ENCODE measurements at regions of chr17 and their contacts with region 1.

Region 1: DNA sequence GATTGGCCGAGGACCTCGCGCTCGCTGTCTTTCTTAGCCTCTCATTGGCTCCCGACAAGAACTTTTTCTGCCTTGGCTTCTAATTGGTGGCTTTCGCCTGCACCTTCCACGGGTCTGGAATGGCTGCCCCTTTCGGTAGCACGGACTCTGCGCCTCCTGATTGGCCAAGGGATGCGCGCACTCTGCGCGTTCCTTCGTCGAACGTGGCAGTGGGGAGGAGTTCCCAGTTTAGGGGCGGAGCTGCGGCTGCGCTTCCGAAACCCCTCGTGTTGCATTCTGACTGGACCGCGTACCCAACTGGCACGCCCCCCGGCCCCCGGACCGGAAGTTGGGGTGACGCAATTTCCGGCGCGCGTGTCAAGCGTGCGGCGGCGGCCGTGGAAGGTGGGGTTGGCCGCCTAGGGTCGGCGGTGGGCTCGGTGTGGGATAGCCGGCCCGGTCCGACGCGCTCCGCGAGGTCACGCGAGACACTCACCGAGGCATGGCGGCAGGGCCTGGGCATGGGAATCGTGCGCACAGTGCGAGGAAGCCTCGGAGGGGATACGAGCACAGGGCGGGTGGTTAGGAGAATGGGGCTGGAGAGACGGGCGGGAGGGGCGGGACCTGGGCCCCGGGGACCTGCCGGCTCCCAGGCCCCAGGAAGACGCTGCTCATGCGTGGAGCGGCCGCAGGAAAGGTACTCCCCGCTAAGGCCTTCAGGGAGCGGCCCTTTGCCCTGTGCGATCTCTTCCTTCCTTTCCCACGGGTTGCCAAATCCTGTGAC is 602 bp upstream of the P4HB start:
- DNase-seq: peak; percentile 100
- H3K4me3 ChIP-seq: peak overlapping the region in 2 of 3 experiments; percentile 39 to 61
- H3K27ac ChIP-seq: peak overlapping the region; percentile 80
- H3K4me1 ChIP-seq: peaks cover 20% of the 10 kb centered on the region
- H3K27me3 ChIP-seq: no peaks in the 10 kb centered on the region
- CTCF ChIP-seq: no peak
- POLR2A ChIP-seq: peak; percentile 95

Region 2: GRCh38 chr17:81693509-81694210 is 167.3 kb before region 1 on chr17:
- CTCF ChIA-PET with region 1: no interaction called
- POLR2A ChIA-PET with region 1: no interaction called
- dilution Hi-C with region 1: no loop called
- intact Hi-C with region 1: no loop called
- DNase-seq: no peak
- H3K4me3 ChIP-seq: no peak overlapping the region
- H3K27ac ChIP-seq: no peak overlapping the region
- H3K4me1 ChIP-seq: no peaks in the 10 kb centered on the region
- H3K27me3 ChIP-seq: no peaks in the 10 kb centered on the region
- CTCF ChIP-seq: no peak
- POLR2A ChIP-seq: no peak

Region 3: DNA sequence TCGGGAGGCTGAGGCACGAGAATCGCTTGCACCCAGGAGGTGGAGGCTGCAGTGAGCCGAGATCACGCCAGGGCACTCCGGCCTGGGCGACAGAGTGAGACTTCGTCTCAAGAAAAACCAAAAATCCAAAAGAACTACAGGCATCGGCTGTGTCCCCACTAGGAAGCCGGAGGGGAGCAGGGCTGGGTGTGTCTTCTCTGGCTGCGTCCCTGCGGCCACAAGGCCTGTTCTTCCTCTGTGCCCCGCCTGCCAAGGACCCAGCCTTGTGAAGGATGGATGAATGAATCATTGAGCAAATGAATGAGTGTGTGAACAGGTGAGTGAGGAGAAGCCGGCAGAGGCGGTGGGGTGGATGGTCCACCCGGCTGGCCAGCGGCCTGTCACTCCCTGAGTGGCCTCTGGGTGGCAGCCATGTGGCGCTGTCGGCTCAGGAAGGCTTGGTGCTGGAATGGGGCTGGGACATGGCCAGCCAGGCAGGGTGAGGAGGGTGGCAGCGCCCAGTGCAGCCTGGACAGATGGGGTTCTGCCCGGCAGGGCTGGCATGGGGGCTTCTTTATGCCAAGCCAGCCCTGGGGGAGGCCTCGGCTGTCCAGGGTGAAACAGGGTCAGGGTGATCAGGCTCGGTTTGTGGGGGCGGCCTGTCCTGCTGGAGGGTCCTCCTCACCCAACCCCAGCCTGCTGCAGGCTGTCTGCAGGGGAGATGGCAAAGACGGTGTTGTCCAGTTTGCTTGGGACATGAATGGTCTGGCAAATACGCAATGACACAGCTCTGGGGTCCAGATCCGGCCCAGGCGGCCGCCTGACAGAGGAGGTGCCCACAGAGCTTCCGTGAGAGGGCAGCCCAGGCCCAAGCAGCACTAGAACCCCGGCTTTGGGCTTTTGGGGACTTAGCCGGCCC is 127.2 kb before region 1 on chr17:
- CTCF ChIA-PET with region 1: no interaction called
- POLR2A ChIA-PET with region 1: no interaction called
- dilution Hi-C with region 1: no loop called
- intact Hi-C with region 1: loop called (anchors 1 kb)
- DNase-seq: peak; percentile 55
- H3K4me3 ChIP-seq: no peak overlapping the region
- H3K27ac ChIP-seq: no peak overlapping the region
- H3K4me1 ChIP-seq: no peaks in the 10 kb centered on the region
- H3K27me3 ChIP-seq: no peaks in the 10 kb centered on the region
- CTCF ChIP-seq: peak; percentile 92 to 93
- POLR2A ChIP-seq: no peak

Region 4: DNA sequence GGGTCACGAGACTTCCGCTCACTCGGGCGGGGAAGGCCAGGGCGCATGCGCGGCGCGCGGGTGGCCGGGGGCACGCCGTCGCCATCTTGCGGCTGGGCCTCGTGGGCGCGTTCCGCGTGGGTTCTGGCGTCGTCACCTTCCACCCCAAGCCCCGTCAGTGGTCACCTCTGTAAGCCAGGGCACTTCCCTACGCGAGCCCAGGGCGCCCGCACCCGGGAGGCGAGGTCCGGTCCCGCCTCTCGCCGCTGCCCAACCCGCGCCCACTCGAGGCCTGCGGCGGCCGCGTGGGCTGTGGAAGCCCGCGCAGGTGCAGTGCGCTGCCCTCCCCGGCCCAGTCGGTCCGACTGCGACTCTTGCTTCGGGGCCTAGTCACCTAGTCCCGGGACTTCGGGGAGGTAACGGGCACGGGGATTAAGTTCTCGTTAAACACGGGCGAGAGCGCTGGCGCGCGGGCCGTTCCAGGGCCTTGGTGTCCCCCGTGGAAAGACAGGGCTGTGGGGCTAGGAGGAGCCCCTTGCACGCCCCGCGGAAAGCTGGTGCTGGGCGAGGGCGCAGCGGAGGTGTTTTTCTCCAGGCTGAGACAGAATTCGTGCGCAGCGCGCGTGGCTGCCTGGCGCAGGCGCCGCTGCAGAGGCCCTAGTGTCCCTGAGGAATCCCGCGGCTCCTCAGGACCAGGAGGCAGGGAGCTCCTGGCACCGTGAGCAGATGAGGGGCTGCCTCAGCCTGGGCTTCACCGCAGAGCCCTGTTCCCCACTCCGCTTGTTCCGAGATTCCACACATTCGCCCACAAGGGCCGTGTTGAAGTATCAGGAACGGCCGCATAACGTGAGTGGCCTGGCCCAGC is 10.7 kb after region 1 on chr17:
- CTCF ChIA-PET with region 1: no interaction called
- POLR2A ChIA-PET with region 1: no interaction called
- dilution Hi-C with region 1: no loop called
- intact Hi-C with region 1: loop called (anchors 1 kb)
- DNase-seq: peak; percentile 81
- H3K4me3 ChIP-seq: peak overlapping the region; percentile 7 to 77 (median 50)
- H3K27ac ChIP-seq: peak overlapping the region; percentile 77
- H3K4me1 ChIP-seq: peaks cover 17% of the 10 kb centered on the region
- H3K27me3 ChIP-seq: no peaks in the 10 kb centered on the region
- CTCF ChIP-seq: peak; percentile 6 to 45
- POLR2A ChIP-seq: peak; percentile 29

Region 5: DNA sequence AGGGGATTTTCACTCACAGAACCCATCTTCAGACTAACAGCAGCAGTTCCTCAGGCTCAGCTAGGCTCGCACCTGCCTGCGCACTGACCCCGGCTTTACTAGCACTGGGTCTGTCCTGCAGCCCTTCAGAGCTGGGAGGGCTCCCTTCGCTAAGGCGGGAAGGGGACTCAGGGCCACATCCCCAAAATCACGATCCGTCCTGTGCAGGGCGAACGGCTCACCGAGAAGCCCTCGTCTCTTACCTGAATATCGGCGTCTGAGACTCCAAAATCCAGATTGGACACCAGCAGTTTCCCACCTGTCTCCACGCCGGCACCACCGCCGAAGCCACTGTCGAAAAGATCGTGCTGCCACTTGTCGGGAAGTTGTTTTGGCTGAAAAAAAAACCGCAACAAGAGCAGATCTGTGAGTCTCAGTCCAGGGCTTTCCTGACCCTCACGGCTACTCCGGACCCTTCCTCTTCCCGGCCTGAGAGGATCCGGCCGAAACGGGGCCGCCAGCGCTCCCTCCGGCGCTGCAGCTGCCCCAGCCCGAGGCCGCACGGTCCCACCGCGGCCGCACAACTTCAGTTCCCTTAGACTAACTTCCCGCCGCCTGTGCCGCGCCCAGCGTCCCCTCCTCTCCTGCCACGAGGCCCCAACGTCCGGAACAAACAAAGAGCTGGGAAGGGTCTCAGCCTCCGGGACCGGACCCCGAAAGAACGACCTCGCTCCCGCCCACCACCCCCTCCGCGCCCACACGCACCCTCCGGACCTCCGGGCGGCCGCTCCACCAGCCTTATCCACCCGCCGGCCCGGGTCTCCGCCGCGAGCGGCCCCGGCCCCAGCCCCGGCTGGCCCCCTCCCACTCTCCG is 29.7 kb after region 1 on chr17:
- CTCF ChIA-PET with region 1: no interaction called
- POLR2A ChIA-PET with region 1: no interaction called
- dilution Hi-C with region 1: no loop called
- intact Hi-C with region 1: loop called (anchors 1 kb)
- DNase-seq: peak; percentile 34
- H3K4me3 ChIP-seq: peak overlapping the region; percentile 76 to 96 (median 77)
- H3K27ac ChIP-seq: peak overlapping the region; percentile 73
- H3K4me1 ChIP-seq: peaks cover 13% of the 10 kb centered on the region
- H3K27me3 ChIP-seq: no peaks in the 10 kb centered on the region
- CTCF ChIP-seq: no peak
- POLR2A ChIP-seq: no peak

Region 6: DNA sequence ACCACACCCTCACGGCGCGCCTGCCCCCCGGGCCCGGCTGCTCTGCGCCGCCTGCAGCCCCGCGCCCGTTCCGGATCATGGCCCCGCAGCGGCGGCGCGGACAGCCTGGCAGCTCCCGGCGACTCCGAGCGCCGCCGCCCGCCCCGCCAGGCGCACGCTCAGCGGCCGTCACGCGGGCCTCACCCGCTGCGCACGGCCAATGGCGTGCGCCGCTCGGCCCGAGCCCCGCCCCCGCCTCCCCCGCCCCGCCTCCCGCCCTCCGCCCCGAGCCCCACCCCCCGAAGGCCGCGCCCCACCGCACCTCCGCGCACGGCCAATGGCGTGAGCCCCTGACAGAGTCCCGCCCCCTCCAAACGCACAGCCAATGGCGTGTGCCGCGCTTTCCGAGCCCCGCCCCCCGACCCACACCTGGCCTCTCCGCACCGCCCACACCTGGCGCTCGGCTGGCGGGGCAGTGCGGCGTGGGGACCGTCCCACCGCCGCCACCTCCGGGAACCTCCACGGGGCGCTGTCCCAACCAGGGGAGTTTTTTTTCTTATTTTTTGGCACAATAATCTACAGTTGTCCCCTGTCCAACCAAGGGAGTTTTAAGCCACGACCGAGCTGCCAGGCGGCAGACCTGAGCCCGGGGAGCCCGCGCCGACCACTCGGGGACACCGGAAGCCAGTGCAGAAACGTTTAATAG is 50.5 kb after region 1 on chr17 and contains the start of gene PCYT2:
- CTCF ChIA-PET with region 1: no interaction called
- POLR2A ChIA-PET with region 1: no interaction called
- dilution Hi-C with region 1: no loop called
- intact Hi-C with region 1: no loop called
- DNase-seq: peak; percentile 71
- H3K4me3 ChIP-seq: peak within 1 kb of the TSS; percentile 56 to 72 (median 67)
- H3K27ac ChIP-seq: no peak within 1 kb of the TSS
- H3K4me1 ChIP-seq: peaks cover 6% of the 10 kb centered on the region
- H3K27me3 ChIP-seq: no peaks in the 10 kb centered on the region
- CTCF ChIP-seq: no peak
- POLR2A ChIP-seq: peak; percentile 37
- total RNA-seq, gene PCYT2: 52.3 and 57.1 TPM in 2 replicates